ENCODE measurements at regions of chr22 and their contacts with region 1.

Region 1: GRCh38 chr22:31943976-31944699 is at the start of gene YWHAH:
- DNase-seq: peak; percentile 94
- H3K4me3 ChIP-seq: peak within 1 kb of the TSS; percentile 92 to 95
- H3K27ac ChIP-seq: peak within 1 kb of the TSS; percentile 94 to 96
- H3K4me1 ChIP-seq: no peaks in the 10 kb centered on the region
- H3K27me3 ChIP-seq: no peaks in the 10 kb centered on the region
- CTCF ChIP-seq: no peak
- POLR2A ChIP-seq: peak; percentile 59
- total RNA-seq, gene YWHAH: 41.9 to 62.4 TPM

Region 2: GRCh38 chr22:31661851-31662656 is 282.1 kb before region 1 on chr22 and contains the start of gene PISD:
- intact Hi-C with region 1: loop called (anchors 10 kb)
- DNase-seq: peak; percentile 96
- H3K4me3 ChIP-seq: peak within 1 kb of the TSS; percentile 69 to 87
- H3K27ac ChIP-seq: peak within 1 kb of the TSS; percentile 70 to 75
- H3K4me1 ChIP-seq: no peaks in the 10 kb centered on the region
- H3K27me3 ChIP-seq: no peaks in the 10 kb centered on the region
- CTCF ChIP-seq: no peak
- POLR2A ChIP-seq: peak; percentile 86
- total RNA-seq, gene PISD: 35.1 to 91.2 TPM

Region 3: GRCh38 chr22:32020117-32020516 is 76.0 kb after region 1 on chr22:
- intact Hi-C with region 1: no loop called
- DNase-seq: no peak
- H3K4me3 ChIP-seq: no peak overlapping the region
- H3K27ac ChIP-seq: no peak overlapping the region
- H3K4me1 ChIP-seq: no peaks in the 10 kb centered on the region
- H3K27me3 ChIP-seq: no peaks in the 10 kb centered on the region
- CTCF ChIP-seq: no peak
- POLR2A ChIP-seq: no peak